Posterior cingulate gyrus (tissue), 11 donors: ENCODE measurements at regions of chr15 and their contacts with region 1.

Region 1: DNA sequence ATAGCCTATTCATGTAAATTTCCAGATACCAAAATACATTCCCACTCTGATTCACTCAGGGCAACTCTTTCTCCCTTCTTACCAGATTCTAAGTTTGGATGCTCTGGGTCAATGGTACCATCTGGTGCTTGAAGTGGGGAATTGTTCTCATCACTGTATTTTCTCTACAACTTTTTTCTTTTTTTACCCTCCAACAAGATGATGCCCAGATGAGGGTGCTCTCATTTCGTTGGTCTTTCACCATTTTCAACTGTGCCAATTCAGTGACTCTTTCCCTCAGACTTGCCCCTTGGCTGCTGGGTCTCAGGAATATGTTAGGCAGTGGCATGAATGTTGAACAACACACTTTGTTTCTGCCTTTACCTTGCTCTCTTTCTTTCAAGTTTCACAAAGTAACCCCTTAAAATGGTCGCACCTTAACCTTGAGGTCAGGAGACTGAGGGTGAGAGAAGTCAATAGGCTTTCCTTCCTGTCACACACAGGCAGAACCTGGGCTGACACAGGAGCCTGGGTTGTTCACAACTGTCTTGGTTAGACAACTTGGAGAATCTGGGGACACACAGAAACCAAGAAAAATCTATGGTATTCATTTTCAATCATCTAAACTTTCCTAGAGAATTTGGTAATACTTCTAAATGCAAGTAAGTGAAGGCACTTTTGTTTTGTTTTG is 330.7 kb upstream of the SLCO3A1 start:
- DNase-seq: peak in 2 of 10 donors; percentile 41 to 56

Region 2: DNA sequence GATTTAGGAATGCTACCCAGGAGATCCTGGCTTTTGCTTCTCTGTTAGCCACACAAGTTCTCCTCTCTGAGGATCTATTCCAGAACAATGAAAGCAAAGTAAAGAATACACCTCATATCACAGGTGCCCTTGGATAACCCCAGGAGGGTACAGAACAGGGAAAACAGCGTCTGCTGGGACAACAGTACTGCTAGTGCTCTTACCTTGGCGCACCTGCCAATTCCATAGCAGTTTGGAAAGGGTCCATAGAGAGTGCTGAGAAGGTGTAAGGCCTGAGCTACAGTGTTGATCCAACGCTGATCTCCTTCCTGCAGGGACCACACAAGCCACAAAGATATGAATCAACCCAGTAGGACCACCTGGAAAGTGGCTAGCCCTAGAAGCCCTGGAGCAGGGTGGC is 515.5 kb before region 1 on chr15:
- intact Hi-C with region 1: no loop called
- DNase-seq: no peak

Region 3: GRCh38 chr15:91589356-91589755 is 66.6 kb after region 1 on chr15:
- intact Hi-C with region 1: loop called (anchors 10 kb)
- DNase-seq: no peak